MCF 10A (cell line): ENCODE measurements at regions of chr5 and their contacts with region 1.

Region 1: GRCh38 chr5:103582364-103582763 is 19.8 kb upstream of the NUDT12 start:
- DNase-seq: peak; percentile 63
- H3K4me3 Mint-ChIP-seq: no peak overlapping the region
- H3K27ac Mint-ChIP-seq: no peak overlapping the region
- H3K4me1 Mint-ChIP-seq: no peaks in the 10 kb centered on the region
- H3K27me3 Mint-ChIP-seq: peaks cover 29% of the 10 kb centered on the region
- CTCF ChIP-seq: peak; percentile 38

Region 2: GRCh38 chr5:104178829-104179456 is 596.6 kb after region 1 on chr5:
- CTCF ChIA-PET with region 1: interaction called, 29 read pairs
- POLR2A ChIA-PET with region 1: no interaction called
- intact Hi-C with region 1: loop called (anchors 1 kb)
- DNase-seq: peak; percentile 64
- H3K4me3 Mint-ChIP-seq: no peak overlapping the region
- H3K27ac Mint-ChIP-seq: no peak overlapping the region
- H3K4me1 Mint-ChIP-seq: peaks cover 6% of the 10 kb centered on the region
- H3K27me3 Mint-ChIP-seq: no peaks in the 10 kb centered on the region
- CTCF ChIP-seq: peak; percentile 60

Region 3: DNA sequence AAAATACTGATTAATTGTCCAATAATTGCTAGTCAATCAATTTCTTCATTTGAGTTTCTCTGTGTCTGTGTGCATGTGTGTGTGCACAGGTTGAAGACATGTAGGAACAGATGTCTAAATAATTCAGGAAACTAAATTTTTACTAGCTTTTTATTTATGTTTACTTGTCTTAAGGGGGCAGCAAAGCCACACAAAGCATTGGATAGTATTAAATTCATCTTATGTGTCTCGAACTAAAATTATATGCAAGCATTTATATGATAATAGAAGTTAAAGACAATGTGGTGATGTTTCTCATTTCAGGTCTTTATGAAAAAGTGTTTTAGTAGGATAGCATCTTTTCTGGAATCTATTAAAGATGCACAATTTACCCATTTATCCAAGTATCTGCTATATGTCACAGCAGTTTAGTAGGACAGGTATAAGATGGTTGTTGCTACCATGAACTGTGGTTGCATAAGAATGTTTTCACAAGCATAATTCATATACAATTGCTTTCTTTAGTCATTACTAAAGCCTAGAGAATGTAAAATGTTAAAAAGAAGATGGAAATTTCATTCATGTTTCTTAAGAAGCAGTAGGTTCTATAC is 764.9 kb after region 1 on chr5:
- CTCF ChIA-PET with region 1: no interaction called
- POLR2A ChIA-PET with region 1: no interaction called
- intact Hi-C with region 1: loop called (anchors 10 kb)
- DNase-seq: peak; percentile 57
- H3K4me3 Mint-ChIP-seq: no peak overlapping the region
- H3K27ac Mint-ChIP-seq: no peak overlapping the region
- H3K4me1 Mint-ChIP-seq: peaks cover 15% of the 10 kb centered on the region
- H3K27me3 Mint-ChIP-seq: no peaks in the 10 kb centered on the region
- CTCF ChIP-seq: peak; percentile 38